PC-9 (cell line): ENCODE measurements at regions of chrX and their contacts with region 1.

Region 1: DNA sequence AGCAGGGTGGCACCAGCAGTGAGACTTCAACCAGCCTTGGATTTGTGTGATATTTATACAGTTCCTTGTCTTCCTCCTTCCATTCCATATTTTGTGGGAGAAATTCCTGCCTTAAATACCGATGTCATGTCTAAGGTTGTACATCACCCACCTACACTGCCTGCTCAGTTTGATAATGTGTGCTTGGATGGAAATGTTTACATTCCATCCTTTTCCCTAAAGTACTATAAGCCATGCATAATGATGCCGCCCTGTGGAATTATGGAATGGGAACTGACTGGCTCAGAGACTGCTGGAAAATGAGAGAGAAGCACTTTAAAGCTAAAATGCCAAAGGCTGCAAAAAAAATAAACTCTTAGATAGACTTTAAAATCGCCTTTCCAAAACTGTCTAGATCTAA is 11.3 kb upstream of the GLUD2 start:
- DNase-seq: no peak
- H3K4me3 ChIP-seq: no peak overlapping the region
- H3K27ac ChIP-seq: no peak overlapping the region
- H3K4me1 ChIP-seq: no peaks in the 10 kb centered on the region
- H3K27me3 ChIP-seq: no peaks in the 10 kb centered on the region
- CTCF ChIP-seq: no peak

Region 2: DNA sequence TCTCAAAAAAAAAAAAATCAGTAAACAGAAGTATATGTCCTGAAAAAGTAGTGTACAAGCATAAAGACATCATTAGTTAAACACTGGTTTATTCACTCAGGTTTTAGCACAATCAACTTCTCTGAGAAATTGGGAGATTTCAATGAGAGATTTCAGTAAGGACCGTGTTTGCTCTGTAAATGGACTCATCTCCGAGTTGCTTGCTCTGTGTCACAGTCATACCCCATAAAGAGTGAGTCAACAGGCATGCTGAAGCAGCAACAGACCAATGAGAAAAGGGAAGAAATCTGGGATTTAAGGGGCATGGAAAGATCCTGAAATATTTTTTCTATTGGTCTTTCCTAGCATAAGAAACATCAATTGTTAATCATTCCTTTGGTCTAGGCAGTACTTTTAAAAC is 16.0 kb after region 1 on chrX:
- CTCF ChIA-PET with region 1: no interaction called
- POLR2A ChIA-PET with region 1: no interaction called
- intact Hi-C with region 1: no loop called
- DNase-seq: no peak
- H3K4me3 ChIP-seq: no peak overlapping the region
- H3K27ac ChIP-seq: no peak overlapping the region
- H3K4me1 ChIP-seq: no peaks in the 10 kb centered on the region
- H3K27me3 ChIP-seq: no peaks in the 10 kb centered on the region
- CTCF ChIP-seq: no peak

Region 3: GRCh38 chrX:121710422-121710821 is 674.3 kb after region 1 on chrX:
- CTCF ChIA-PET with region 1: no interaction called
- POLR2A ChIA-PET with region 1: no interaction called
- intact Hi-C with region 1: loop called (anchors 10 kb)
- DNase-seq: no peak
- H3K4me3 ChIP-seq: no peak overlapping the region
- H3K27ac ChIP-seq: no peak overlapping the region
- H3K4me1 ChIP-seq: no peaks in the 10 kb centered on the region
- H3K27me3 ChIP-seq: no peaks in the 10 kb centered on the region
- CTCF ChIP-seq: no peak